Right ventricle myocardium superior (tissue), 1 donor: ENCODE measurements at regions of chr18 and their contacts with region 1.

Region 1: GRCh38 chr18:23703057-23703986 is 14.1 kb downstream of the LAMA3 start:
- DNase-seq: no peak
- ATAC-seq: peak; percentile 83

Region 2: GRCh38 chr18:23529597-23529996 is 173.7 kb before region 1 on chr18:
- intact Hi-C with region 1: loop called (anchors 10 kb)
- DNase-seq: no peak
- ATAC-seq: no peak

Region 3: DNA sequence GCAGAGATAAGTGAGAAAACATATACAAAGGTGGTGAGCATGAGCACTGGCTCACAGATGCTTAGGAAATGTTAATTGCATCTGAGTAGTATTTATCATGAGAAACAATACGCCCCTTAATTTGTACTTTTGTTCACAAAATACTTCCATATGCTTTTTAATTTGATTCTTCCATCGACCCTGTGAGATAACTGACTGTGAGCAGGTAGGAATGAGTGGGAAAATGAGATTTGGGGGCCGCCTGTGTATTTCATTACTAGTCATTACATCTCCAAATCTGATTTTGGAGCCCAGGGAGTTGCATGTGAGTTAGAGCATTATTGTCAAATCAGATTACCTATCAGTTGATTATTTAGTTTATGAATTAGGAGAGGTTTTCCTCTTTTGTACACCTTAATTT is 80.3 kb before region 1 on chr18:
- intact Hi-C with region 1: loop called (anchors 5 kb)
- DNase-seq: no peak
- ATAC-seq: no peak